Activated naive CD8-positive, alpha-beta T cell treated with anti-CD3 and anti-CD28 coated beads, Interleukin-2, amount 10 ng/mL, durations not matched to agents 7 days and 5 days (primary cell): ENCODE measurements at regions of chr17 and their contacts with region 1.

Region 1: DNA sequence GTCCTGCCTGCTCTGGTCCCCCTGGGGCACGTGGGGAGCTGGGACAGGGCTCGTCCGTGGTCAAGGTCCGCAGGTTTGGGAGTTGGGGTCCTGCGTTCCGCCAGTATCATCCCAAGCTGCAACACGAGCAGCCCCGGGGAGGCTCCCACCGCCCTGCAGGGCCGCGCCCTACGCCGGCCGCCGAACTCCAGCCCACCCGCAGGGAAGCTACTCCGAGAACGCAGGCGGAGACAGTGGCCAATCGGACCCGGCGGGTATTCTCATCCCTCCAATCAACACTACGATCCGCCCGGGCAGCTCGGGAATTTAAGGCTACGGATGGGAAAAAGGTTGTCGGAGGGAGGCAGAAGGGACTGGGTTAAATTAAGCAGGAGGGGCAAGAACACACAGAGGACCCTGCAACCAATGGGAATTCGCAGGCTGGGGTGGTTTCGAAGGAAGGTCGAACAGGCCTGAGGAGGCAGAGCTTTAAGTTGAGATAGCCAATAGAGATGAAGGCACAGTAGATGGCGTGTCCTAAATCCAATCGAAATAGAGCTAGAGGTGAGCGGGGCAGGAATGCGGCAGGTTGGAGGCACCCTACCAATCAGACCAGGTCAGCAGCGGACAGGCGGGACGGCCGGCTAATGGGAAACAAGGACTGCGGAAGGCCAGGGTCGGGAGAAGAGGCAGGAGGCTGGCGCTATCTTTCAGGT is 626 bp downstream of the SPAG7 start:
- DNase-seq: peak; percentile 76
- ATAC-seq: peak; percentile 91
- H3K4me3 Mint-ChIP-seq: no peak overlapping the region
- H3K27ac Mint-ChIP-seq: no peak overlapping the region
- H3K4me1 Mint-ChIP-seq: peaks cover 17% of the 10 kb centered on the region
- H3K27me3 Mint-ChIP-seq: no peaks in the 10 kb centered on the region

Region 2: GRCh38 chr17:4908301-4908700 is 58.7 kb before region 1 on chr17:
- POLR2A ChIA-PET with region 1: interaction called, 19 read pairs
- DNase-seq: peak; percentile 41
- ATAC-seq: peak; percentile 34
- H3K4me3 Mint-ChIP-seq: no peak overlapping the region
- H3K27ac Mint-ChIP-seq: no peak overlapping the region
- H3K4me1 Mint-ChIP-seq: peaks cover 4% of the 10 kb centered on the region
- H3K27me3 Mint-ChIP-seq: peaks cover 11% of the 10 kb centered on the region

Region 3: DNA sequence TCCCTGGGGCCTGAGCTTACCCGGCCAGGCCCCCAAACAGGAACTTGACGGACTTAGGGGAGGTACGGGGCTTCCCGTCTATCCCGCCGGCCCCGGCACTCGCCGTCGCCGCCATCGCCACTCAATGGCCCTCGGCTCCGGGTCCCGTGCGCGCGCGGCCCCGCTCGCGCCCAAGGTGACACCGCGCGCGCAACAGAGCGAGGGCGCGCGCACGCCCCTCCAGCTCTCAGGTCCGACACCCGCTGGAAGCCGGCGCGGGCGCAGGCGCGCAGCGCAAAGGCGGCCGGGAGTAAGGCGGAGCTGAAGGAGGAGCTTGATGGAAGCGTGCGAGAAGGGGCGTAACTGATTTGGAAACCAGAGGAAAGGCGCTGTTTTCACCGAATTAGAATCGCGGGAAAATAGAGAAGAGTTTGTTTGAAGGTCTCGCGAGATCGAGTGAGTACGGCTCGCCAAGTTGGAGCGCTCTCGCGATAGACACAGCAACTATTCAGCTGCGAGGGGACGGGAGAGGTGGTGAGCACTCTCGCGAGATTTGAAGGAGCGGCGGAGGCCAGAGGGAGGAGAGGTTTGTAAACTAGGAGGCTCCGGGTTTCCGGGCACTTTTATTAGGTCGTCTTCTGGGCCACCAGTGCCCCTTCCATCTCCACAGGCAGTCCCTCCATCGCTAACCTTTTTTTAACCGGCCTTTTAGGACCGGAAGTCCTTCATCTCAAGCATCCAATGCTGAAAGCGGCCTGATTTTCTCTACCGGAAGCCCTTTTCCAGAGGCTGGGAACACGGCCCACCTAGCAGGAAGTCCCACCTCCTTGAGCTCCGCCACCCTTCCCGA is 27.0 kb before region 1 on chr17 and contains the starts of genes RNF167 and SLC25A11:
- POLR2A ChIA-PET with region 1: interaction called, 441 read pairs
- DNase-seq: peak; percentile 94
- ATAC-seq: peak; percentile 77
- H3K4me3 Mint-ChIP-seq: peak within 1 kb of the TSS; percentile 100
- H3K27ac Mint-ChIP-seq: peak within 1 kb of the TSS; percentile 88
- H3K4me1 Mint-ChIP-seq: peaks cover 49% of the 10 kb centered on the region
- H3K27me3 Mint-ChIP-seq: no peaks in the 10 kb centered on the region
- total RNA-seq, gene RNF167: 202 TPM
- total RNA-seq, gene SLC25A11: 67.6 to 78.1 TPM

Region 4: GRCh38 chr17:4956493-4957061 is 10.4 kb before region 1 on chr17:
- POLR2A ChIA-PET with region 1: interaction called, 441 read pairs
- DNase-seq: peak; percentile 64
- ATAC-seq: peak; percentile 37
- H3K4me3 Mint-ChIP-seq: no peak overlapping the region
- H3K27ac Mint-ChIP-seq: peak overlapping the region; percentile 57
- H3K4me1 Mint-ChIP-seq: peaks cover 10% of the 10 kb centered on the region
- H3K27me3 Mint-ChIP-seq: no peaks in the 10 kb centered on the region

Region 5: DNA sequence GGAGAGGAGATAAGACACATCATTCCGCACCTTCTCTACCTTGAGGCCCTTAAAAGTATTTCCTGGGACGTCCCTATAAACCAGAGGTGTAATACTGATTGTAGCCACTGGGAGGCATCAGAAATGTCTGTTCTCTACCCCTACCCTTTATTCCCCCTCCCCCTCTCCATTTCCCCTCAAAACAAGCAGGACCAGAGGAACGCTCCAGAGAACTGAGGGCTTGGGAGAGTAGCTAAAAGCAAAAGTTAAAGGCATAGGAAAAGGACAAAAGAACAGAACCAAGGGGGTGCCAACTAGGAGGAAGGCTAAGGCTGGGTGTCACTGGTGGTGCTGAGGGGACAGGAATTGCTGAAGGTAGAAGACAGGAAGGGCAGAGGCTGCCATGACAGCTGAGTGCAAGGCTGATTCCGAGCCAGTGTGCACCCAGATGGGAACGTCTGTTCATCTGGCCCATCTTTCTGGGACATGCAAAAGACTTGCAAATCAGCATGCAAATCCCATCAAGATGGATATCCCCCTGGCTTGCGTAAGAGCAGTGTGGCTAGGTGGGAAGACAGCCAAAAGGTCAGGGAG is 13.7 kb after region 1 on chr17:
- POLR2A ChIA-PET with region 1: interaction called, 15 read pairs
- DNase-seq: no peak
- ATAC-seq: peak; percentile 70
- H3K4me3 Mint-ChIP-seq: no peak overlapping the region
- H3K27ac Mint-ChIP-seq: peak overlapping the region; percentile 83
- H3K4me1 Mint-ChIP-seq: peaks cover 12% of the 10 kb centered on the region
- H3K27me3 Mint-ChIP-seq: no peaks in the 10 kb centered on the region

Region 6: GRCh38 chr17:4986951-4987766 is 20.2 kb after region 1 on chr17 and contains the start of gene CAMTA2:
- POLR2A ChIA-PET with region 1: interaction called, 19 read pairs
- DNase-seq: peak; percentile 91
- ATAC-seq: peak; percentile 87
- H3K4me3 Mint-ChIP-seq: peak within 1 kb of the TSS; percentile 85
- H3K27ac Mint-ChIP-seq: peak within 1 kb of the TSS; percentile 78
- H3K4me1 Mint-ChIP-seq: peaks cover 26% of the 10 kb centered on the region
- H3K27me3 Mint-ChIP-seq: no peaks in the 10 kb centered on the region
- total RNA-seq, gene CAMTA2: 62.0 to 67.7 TPM